ENCODE measurements at regions of chr1 and their contacts with region 1.

Region 1: DNA sequence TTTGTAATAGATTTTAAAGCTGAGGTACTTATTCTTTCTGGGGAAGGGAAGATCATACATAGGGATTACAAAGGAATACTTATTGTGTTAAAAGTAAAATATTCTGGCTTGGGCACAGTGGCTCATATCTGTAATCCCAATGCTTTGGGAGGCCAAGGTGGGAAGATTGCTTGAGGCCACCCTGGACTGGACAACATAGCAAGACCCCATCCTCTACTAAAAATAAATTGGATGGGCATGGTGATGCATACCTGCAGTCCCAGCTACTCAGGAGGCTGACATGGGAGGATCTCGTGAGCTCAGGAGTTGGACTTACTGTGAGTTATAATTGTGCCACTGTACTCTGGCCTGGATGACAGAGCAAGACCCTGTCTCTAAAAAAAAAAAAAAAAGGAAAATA is 27.6 kb downstream of the GABPB2 start:
- DNase-seq: no peak
- ATAC-seq: no peak
- H3K4me3 ChIP-seq: no peak overlapping the region
- H3K27ac ChIP-seq: no peak overlapping the region
- H3K4me1 ChIP-seq: peaks cover 7 to 13% of the 10 kb centered on the region in 2 experiments
- H3K27me3 ChIP-seq: no peaks in the 10 kb centered on the region
- CTCF ChIP-seq: no peak
- POLR2A ChIP-seq: no peak
- RAD21 ChIP-seq: no peak

Region 2: DNA sequence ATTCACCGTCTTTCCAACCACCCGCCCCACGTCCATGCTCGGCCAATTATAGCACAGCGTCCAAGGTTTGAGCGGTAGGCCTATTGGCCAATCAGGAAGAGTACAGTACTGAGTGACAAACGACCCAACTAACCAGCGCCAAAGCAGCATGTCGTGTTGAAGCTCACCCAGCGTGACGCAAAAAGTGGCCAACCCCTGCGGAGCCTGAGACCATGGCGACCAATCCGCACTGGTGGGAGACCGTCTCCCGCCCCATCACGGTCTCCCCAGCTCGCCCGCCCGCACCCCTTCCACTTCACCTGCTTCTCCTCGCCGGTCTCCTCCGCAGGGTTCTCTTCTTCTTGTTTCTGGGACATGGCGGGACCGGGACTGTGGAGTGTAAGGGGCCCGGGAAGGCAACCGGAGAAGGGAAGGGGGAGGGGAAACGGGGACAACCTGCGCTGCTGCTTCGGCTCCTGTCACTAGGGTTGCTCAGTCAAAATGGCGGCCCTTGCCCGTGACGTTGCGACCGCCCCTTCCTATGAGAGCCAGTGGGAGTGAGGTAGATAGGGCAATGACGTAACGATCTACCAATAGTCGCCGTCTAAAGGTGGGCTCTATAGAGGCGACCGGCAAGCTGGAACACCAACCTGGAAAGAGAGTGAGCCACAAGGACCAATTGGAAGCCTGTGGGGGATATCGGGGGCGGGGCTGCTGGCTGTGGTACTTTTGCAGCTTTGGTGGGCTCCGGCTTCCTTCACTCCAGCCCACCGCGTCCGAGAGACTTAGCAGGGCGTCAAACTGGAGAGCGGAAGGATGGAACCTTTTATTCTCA is 468.8 kb before region 1 on chr1 and contains the start of gene ENSA:
- CTCF ChIA-PET with region 1: no interaction called
- POLR2A ChIA-PET with region 1: no interaction called
- RAD21 ChIA-PET with region 1: no interaction called
- intact Hi-C with region 1: no loop called
- DNase-seq: peak; percentile 99
- ATAC-seq: peak; percentile 92
- H3K4me3 ChIP-seq: peak within 1 kb of the TSS; percentile 65 to 79
- H3K27ac ChIP-seq: peak within 1 kb of the TSS; percentile 73
- H3K4me1 ChIP-seq: peaks cover 9 to 29% of the 10 kb centered on the region in 2 experiments
- H3K27me3 ChIP-seq: no peaks in the 10 kb centered on the region
- CTCF ChIP-seq: no peak
- POLR2A ChIP-seq: peak; percentile 55
- RAD21 ChIP-seq: no peak
- total RNA-seq, gene ENSA: 130 TPM

Region 3: DNA sequence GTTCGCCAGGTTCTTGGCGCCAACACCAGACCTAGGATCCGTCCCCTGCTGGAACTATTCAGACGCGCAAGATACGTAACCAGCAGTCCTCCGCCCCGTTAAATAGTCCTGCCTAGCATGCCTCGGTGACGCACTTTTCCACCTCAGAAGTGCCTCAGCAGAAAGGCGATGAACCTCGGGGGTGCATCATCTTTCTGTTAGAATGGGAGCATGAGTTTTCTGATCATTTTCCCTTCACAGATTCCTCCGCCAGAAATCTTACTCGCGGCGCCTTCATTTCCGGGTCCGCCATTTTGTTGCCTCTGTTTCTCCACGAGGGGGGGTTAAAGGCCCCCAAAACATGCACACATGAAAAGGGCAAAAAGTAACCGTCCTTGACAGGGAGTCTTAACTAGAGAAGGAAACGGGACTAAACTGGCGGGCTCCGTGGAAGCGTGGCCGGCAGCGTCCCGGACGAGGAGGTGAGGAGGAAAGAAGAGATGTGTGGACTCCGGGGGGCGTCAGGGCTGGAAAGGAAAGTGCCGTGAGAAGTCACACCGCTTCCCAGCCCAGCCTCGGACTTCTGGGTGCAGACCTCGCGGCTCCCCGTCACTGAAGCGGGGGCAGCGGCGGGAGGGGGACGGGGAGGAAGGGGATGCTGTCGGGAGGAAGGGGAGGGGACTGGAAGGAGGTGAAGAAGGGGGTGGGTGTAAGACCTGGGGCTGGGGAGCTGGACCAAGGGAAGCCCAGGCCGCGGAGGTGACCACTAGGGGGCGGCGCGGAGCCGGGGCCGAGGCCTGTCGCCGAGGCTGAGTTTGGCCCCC is 27.5 kb before region 1 on chr1 and contains the start of gene GABPB2:
- CTCF ChIA-PET with region 1: interaction called, 17 read pairs
- POLR2A ChIA-PET with region 1: interaction called, 4 read pairs
- RAD21 ChIA-PET with region 1: no interaction called
- intact Hi-C with region 1: no loop called
- DNase-seq: peak; percentile 91
- ATAC-seq: peak; percentile 90
- H3K4me3 ChIP-seq: peak within 1 kb of the TSS; percentile 74 to 78
- H3K27ac ChIP-seq: peak within 1 kb of the TSS; percentile 98
- H3K4me1 ChIP-seq: peaks cover 22 to 32% of the 10 kb centered on the region in 2 experiments
- H3K27me3 ChIP-seq: no peaks in the 10 kb centered on the region
- CTCF ChIP-seq: peak; percentile 50 to 89 (median 87); a peak in 5 of 6 replicates
- POLR2A ChIP-seq: peak; percentile 92
- RAD21 ChIP-seq: peak; percentile 62
- total RNA-seq, gene GABPB2: 7.7 TPM

Region 4: GRCh38 chr1:151085953-151086559 is 12.1 kb before region 1 on chr1:
- CTCF ChIA-PET with region 1: interaction called, 14 read pairs
- POLR2A ChIA-PET with region 1: interaction called, 3 read pairs
- RAD21 ChIA-PET with region 1: interaction called in 1 of 2 experiments, 3 read pairs
- intact Hi-C with region 1: no loop called
- DNase-seq: no peak
- ATAC-seq: no peak
- H3K4me3 ChIP-seq: no peak overlapping the region
- H3K27ac ChIP-seq: no peak overlapping the region
- H3K4me1 ChIP-seq: no peaks in the 10 kb centered on the region
- H3K27me3 ChIP-seq: no peaks in the 10 kb centered on the region
- CTCF ChIP-seq: no peak
- POLR2A ChIP-seq: no peak
- RAD21 ChIP-seq: no peak

Region 5: GRCh38 chr1:151251656-151252470 is 153.7 kb after region 1 on chr1:
- CTCF ChIA-PET with region 1: interaction called, 20 read pairs
- POLR2A ChIA-PET with region 1: no interaction called
- RAD21 ChIA-PET with region 1: interaction called in 1 of 2 experiments, 3 read pairs
- intact Hi-C with region 1: no loop called
- DNase-seq: peak; percentile 60
- ATAC-seq: peak; percentile 63
- H3K4me3 ChIP-seq: no peak overlapping the region
- H3K27ac ChIP-seq: no peak overlapping the region
- H3K4me1 ChIP-seq: peaks cover 7 to 12% of the 10 kb centered on the region in 2 experiments; a peak in 3 of 4 replicates
- H3K27me3 ChIP-seq: no peaks in the 10 kb centered on the region
- CTCF ChIP-seq: peak; percentile 72 to 91 (median 84); a peak in 5 of 6 replicates
- POLR2A ChIP-seq: no peak
- RAD21 ChIP-seq: peak; percentile 77

Measured in HCT116 (cell line).